Activated T-helper 2 cell treated with anti-CD3 and anti-CD28 coated beads, Interferon-gamma antibody, Interleukin-2, Interleukin-4, amounts not matched to agents 10 μg/mL and 5 μg/mL and 100 μg/mL, durations not matched to agents 14 hours and 24 hours and 36 hours (primary cell): ENCODE measurements at regions of chr3 and their contacts with region 1.

Region 1: GRCh38 chr3:46488735-46489361 is 8.9 kb upstream of the RTP3 start:
- DNase-seq: peak; percentile 88
- H3K4me3 Mint-ChIP-seq: no peak overlapping the region
- H3K27ac Mint-ChIP-seq: no peak overlapping the region
- H3K4me1 Mint-ChIP-seq: peaks cover 15% of the 10 kb centered on the region
- H3K27me3 Mint-ChIP-seq: peaks cover 40% of the 10 kb centered on the region

Region 2: DNA sequence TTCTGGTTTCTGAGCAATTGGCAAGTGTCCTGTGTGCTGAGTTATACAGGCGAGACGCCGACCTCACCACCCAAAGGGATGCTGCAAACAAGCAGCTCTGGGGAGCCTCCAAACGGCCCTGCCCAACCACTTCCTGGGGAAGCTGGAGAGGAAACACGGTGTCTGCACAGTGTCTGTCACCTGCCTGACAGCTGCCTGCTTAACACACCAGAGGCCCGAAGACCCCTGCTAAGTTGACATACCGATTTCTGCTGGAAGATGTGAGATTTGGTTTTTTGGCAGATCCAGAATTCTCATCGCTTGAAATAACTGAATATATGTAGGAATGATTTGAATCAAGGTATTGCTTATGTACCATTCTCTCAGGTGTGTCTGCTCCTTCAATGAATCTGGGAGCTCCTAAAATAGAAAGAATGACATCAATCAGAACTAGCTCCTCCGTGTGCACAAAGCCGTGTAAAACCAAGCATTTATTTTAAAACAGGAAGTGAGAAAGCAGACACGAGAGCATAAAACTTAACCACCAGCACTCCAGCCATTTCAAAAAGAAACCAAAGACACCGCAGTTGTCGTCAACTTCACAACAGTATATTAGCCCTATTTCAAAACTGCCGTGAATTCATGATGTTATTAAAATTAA is 50.1 kb after region 1 on chr3:
- intact Hi-C with region 1: loop called (anchors 5 kb)
- DNase-seq: peak; percentile 75
- H3K4me3 Mint-ChIP-seq: peak overlapping the region; percentile 76
- H3K27ac Mint-ChIP-seq: peak overlapping the region; percentile 87
- H3K4me1 Mint-ChIP-seq: peaks cover 62% of the 10 kb centered on the region
- H3K27me3 Mint-ChIP-seq: peaks cover 23% of the 10 kb centered on the region

Region 3: DNA sequence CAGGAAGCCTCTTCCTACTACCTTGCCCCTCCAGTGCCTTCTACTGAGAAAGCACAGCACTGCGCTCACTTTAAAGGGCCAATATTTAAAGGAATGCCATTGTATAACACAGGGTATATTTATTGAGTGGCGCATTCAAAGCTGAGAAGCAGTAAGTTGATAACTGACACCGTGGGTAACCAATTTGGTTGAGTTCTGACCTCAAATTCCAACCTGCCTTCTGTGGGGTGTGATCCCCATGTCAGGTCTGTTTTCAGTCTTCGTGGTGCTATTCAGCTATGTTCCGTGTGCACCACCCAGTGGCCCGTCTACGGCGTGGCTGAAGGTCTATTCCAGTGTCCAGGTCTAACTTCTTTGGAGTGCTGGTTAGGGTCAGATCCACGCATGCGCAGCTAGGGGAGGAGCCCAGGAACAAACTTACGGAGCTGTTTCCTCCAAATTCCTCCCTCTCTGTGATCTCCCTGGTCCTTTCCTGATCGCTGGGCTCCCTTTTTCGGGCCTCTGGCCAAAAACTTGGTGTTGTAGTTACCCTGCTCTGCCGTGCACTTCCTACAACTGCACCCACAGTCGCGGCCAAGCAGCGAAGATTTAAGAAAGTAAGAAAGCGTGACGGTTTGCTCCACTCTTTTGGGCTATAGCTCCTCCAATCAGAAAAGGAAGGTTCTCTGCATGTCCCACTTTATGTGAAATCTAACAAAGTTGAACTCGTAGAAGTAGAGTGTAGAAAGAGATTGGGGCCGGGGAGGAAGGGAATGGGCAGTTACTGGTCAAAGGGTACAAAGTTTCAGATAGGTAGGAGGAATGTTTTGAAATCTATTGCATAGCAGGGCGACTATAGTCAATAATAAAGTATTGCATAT is 69.6 kb after region 1 on chr3:
- intact Hi-C with region 1: loop called (anchors 1 kb)
- DNase-seq: peak; percentile 61
- H3K4me3 Mint-ChIP-seq: peak overlapping the region; percentile 76
- H3K27ac Mint-ChIP-seq: no peak overlapping the region
- H3K4me1 Mint-ChIP-seq: peaks cover 9% of the 10 kb centered on the region
- H3K27me3 Mint-ChIP-seq: peaks cover 52% of the 10 kb centered on the region

Region 4: DNA sequence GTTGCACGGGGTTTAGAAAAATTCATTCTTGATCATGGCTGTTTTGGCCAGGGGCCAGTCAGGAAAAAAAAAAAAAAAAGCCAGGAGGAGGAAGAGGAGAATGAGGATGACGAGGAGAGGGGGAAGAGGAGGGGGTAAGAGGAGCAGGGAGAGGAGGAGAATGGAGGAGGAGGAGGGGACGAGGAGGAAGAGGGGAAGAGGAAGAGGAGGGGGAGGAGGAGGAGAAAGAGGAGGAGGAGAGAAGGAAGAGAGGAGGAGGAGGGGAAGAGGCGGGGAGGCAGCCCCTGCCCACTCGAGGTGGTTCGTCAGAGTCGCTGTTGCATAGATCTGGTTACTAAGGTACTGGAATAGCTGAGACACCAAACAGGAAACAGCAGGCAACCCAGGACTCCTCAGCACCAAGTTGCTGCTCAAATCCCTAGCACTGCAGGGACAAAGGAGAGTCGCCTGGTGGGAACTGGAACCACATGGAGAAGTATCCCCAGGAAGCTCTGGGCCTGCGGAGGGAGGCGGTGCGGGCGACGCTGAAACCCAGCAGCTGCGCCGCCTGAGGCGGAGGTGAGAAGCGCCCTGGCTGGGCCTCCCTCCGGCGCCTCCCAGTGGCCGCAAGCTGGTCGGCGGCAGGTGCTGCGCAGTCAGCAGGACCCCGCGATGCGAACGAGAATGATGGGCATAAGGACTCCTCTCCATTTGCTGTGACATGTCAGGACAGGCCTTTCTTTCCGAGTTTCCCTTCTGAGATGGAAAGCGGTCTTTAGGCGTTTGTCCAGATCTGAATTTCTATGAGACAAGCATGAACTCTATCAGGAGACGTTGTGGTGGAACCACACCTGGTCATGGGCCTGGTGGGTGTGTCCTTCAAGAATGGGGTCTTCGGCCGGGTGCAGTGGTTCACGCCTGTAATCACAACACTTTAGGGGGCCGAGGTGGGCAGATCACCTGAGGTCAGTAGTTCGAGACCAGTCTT is 141.0 kb after region 1 on chr3:
- intact Hi-C with region 1: loop called (anchors 1 kb)
- DNase-seq: peak; percentile 68
- H3K4me3 Mint-ChIP-seq: peak overlapping the region; percentile 40
- H3K27ac Mint-ChIP-seq: no peak overlapping the region
- H3K4me1 Mint-ChIP-seq: peaks cover 14% of the 10 kb centered on the region
- H3K27me3 Mint-ChIP-seq: peaks cover 12% of the 10 kb centered on the region